PC-9 (cell line): ENCODE measurements at regions of chr19 and their contacts with region 1.

Region 1: GRCh38 chr19:57279418-57280066 is 743 bp upstream of the ZNF460 start:
- DNase-seq: peak; percentile 91 to 93
- H3K4me3 ChIP-seq: peak overlapping the region; percentile 79
- H3K27ac ChIP-seq: peak overlapping the region; percentile 97
- H3K4me1 ChIP-seq: peaks cover 41% of the 10 kb centered on the region
- H3K27me3 ChIP-seq: no peaks in the 10 kb centered on the region
- CTCF ChIP-seq: no peak; the same call in none of the 2 replicates

Region 2: DNA sequence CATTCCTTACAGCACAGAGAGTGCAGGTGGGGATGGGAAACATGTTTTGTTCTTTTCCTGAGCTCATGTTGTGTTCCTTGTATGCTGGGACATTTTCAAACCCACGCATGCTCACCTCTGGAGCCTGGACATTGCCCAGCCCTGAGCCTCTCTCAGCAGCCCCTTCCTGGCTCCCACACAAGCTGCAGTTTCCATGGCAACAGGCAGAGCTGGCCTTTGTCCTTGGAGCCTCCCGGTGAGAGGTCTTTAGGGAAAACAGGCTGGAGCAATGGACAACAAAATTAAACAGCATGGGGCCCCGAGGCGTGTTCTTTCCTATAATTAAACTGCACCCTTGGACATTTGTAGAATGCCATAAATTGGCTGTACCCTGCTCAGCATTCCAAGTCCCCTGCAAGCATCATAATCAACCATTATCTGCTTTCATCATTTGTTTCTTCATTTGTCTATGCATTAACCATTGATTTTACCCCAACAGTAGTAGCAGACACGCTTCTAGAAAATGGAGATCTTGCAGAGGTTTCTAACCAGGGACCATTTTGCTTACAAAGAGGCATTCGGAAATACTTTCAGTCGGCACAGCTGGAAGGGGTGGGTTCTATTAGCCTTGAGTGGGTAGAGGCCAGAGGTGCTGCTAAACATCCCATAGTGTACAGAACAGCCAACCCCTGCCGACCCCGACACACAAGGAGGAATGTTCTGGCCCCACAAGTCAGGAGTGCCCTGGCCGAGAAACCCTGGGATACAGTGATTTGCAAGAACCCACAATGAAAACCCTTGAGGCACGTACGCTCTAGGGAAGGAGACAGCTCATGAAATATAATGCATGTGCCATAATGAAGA is 305.6 kb before region 1 on chr19:
- CTCF ChIA-PET with region 1: no interaction called
- POLR2A ChIA-PET with region 1: no interaction called
- intact Hi-C with region 1: no loop called
- DNase-seq: no peak
- H3K4me3 ChIP-seq: no peak overlapping the region
- H3K27ac ChIP-seq: no peak overlapping the region
- H3K4me1 ChIP-seq: no peaks in the 10 kb centered on the region
- H3K27me3 ChIP-seq: peaks cover 92% of the 10 kb centered on the region
- CTCF ChIP-seq: no peak

Region 3: DNA sequence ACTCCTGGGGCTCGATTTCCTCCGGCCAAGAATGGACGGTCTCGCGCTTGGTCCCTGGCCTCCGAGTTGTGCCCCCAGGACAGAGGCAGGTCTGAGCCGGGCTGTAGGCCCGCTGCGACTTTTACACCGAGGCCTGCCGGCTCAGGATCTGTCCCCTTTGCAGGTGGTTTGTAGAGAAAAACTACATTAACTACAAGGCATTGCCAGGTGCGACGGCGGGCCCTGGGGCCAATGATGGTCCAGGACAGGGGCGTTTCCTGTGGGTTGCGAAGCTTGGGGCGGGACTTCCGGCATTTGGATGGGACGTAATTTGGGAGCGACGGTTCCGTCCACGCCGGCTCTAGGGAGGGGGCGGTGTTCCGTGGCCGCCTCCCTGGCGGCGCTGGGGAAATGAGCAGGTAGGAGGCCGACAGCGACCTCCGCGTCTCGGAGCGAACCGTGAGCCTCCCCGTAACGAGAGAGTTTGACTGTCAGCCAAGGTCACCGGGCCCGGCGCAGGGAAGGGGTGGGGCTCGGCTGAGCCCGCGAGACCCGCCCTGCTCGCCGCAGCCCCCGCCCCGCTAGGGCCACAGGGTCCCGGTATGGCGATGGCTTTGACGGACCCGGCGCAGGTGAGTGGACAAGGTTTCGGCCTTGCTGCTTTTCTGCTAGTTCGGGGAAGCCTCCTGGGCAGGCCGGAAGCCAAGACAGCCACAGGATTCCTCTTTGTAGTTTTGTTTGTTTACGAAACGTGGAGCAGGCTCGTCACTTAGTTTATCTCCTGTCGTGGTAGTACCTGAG is 39.0 kb before region 1 on chr19 and contains the start of gene ZNF805:
- CTCF ChIA-PET with region 1: interaction called, 3 read pairs
- POLR2A ChIA-PET with region 1: no interaction called
- intact Hi-C with region 1: loop called (anchors 1 kb)
- DNase-seq: peak; percentile 82 to 94
- H3K4me3 ChIP-seq: peak within 1 kb of the TSS; percentile 95
- H3K27ac ChIP-seq: peak within 1 kb of the TSS; percentile 69
- H3K4me1 ChIP-seq: peaks cover 17% of the 10 kb centered on the region; the same call in 1 of the 2 replicates
- H3K27me3 ChIP-seq: no peaks in the 10 kb centered on the region
- CTCF ChIP-seq: no peak
- total RNA-seq, gene ZNF805: 13.5 and 19.8 TPM in 2 replicates

Region 4: DNA sequence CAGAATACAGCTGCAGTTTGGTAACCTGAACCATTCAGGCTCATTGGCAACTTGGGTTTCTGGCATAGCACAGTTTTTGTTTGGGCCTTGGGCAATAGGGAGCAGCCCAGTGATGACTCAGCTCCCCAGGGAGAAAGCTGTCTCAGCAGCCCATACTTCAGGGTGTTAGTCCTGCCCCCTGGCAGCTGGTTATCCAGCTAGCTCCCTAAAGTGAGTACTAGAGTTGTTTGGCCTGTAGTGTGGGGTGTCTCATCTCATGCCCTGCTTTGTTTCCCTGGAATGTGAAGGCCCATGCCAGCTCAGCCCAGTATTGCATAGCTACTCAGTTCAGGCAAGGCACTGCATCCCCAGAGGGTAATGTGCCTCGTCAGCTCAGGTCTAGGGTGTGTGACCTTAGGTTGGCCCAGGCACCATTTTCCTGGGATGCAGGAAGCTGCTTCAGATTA is 22.5 kb after region 1 on chr19:
- CTCF ChIA-PET with region 1: no interaction called
- POLR2A ChIA-PET with region 1: no interaction called
- intact Hi-C with region 1: loop called (anchors 1 kb)
- DNase-seq: peak; percentile 89 to 95
- H3K4me3 ChIP-seq: no peak overlapping the region
- H3K27ac ChIP-seq: peak overlapping the region; percentile 59
- H3K4me1 ChIP-seq: peaks cover 26% of the 10 kb centered on the region
- H3K27me3 ChIP-seq: no peaks in the 10 kb centered on the region
- CTCF ChIP-seq: no peak

Region 5: DNA sequence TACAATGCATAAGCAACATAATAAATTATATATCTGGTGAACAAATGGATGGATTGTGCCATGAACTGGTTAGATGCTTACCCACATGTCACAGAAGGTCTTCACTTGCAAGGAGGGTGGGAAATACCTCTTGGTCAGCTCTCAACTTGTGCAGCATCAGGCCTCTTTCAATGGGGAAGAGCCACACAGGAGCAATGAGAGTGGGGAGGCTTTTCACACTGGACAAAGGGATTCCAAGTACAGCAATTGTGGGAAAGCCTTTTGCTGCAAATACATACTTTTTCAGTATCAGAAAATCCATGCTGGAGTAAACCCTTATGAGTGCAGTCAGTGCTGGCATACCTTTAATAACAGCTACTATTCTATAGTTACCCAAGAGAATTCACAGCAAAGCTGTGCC is 29.0 kb after region 1 on chr19:
- CTCF ChIA-PET with region 1: no interaction called
- POLR2A ChIA-PET with region 1: interaction called, 15 read pairs
- intact Hi-C with region 1: no loop called
- DNase-seq: peak in 1 of 2 experiments; percentile 31
- H3K4me3 ChIP-seq: no peak overlapping the region
- H3K27ac ChIP-seq: no peak overlapping the region
- H3K4me1 ChIP-seq: no peaks in the 10 kb centered on the region
- H3K27me3 ChIP-seq: no peaks in the 10 kb centered on the region
- CTCF ChIP-seq: no peak

Region 6: DNA sequence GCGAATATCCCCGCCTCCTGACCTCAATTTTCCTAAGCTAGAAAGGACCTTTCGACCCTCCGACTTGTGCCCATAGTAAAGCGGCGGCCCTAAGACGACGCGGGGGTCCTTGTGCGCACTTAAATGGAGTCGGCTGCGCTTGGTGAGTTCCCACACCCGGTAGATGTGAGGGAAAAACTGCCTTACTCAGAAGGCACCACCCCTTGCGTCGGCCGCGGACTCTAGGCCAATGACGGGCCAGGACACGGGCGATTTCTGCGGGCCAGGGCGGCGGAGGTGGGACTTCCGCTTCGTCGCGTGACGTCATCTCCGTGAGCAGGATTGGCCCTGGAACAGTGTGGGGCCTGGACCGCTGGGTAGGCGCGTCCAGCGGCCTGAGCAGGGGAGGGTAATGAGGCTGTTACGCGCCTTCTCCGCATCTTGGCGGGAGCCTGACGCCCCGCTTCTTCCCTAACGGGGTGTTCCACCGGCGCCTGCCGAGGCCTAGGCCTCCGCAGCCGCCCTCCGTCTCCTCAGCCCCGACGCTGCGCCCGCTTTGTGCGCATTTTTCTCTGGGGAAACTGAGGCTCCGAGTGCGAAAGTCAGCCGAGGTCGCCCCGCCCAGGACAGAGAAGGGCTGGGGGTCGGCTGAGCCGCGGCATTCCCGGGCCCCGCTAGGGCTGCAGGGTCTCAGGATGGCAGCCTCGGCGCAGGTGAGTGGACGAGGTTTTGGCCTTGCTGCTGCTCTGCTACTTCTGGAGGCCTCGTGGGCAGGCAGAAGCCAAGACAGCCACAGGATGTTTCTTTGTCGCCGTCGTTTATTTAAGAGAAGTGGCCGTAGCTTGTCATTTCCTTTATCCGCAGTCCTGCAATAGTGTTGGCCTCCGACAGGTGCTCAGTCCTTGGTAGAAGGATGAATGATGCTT is 40.9 kb after region 1 on chr19 and contains the start of gene ZNF543:
- CTCF ChIA-PET with region 1: no interaction called
- POLR2A ChIA-PET with region 1: no interaction called
- intact Hi-C with region 1: loop called (anchors 1 kb)
- DNase-seq: peak; percentile 92 to 96
- H3K4me3 ChIP-seq: peak within 1 kb of the TSS; percentile 91
- H3K27ac ChIP-seq: peak within 1 kb of the TSS; percentile 51
- H3K4me1 ChIP-seq: peaks cover 19% of the 10 kb centered on the region
- H3K27me3 ChIP-seq: no peaks in the 10 kb centered on the region
- CTCF ChIP-seq: no peak
- total RNA-seq, gene ZNF543: 8.9 and 9.5 TPM in 2 replicates

Region 7: GRCh38 chr19:57338877-57339276 is 59.3 kb after region 1 on chr19:
- CTCF ChIA-PET with region 1: no interaction called
- POLR2A ChIA-PET with region 1: no interaction called
- intact Hi-C with region 1: no loop called
- DNase-seq: no peak
- H3K4me3 ChIP-seq: no peak overlapping the region
- H3K27ac ChIP-seq: no peak overlapping the region
- H3K4me1 ChIP-seq: no peaks in the 10 kb centered on the region
- H3K27me3 ChIP-seq: no peaks in the 10 kb centered on the region
- CTCF ChIP-seq: no peak

Region 8: GRCh38 chr19:57350877-57351805 is 71.6 kb after region 1 on chr19 and contains the start of gene ZNF304:
- CTCF ChIA-PET with region 1: no interaction called
- POLR2A ChIA-PET with region 1: interaction called, 4 read pairs
- intact Hi-C with region 1: loop called (anchors 1 kb)
- DNase-seq: peak; percentile 94 to 95
- H3K4me3 ChIP-seq: peak within 1 kb of the TSS; percentile 95
- H3K27ac ChIP-seq: 0 out of 2 replicates have a peak within 1 kb of the TSS, but pooled peaks have one; percentile 16
- H3K4me1 ChIP-seq: peaks cover 10% of the 10 kb centered on the region
- H3K27me3 ChIP-seq: no peaks in the 10 kb centered on the region
- CTCF ChIP-seq: no peak
- total RNA-seq, gene ZNF304: 10.9 and 11.4 TPM in 2 replicates

Region 9: GRCh38 chr19:57362997-57363705 is 83.6 kb after region 1 on chr19 and contains the starts of genes TRAPPC2B and ZNF547:
- CTCF ChIA-PET with region 1: no interaction called
- POLR2A ChIA-PET with region 1: no interaction called
- intact Hi-C with region 1: loop called (anchors 1 kb)
- DNase-seq: peak; percentile 99
- H3K4me3 ChIP-seq: peak within 1 kb of the TSS; percentile 72
- H3K27ac ChIP-seq: peak within 1 kb of the TSS; percentile 47
- H3K4me1 ChIP-seq: peaks cover 6% of the 10 kb centered on the region; the same call in 1 of the 2 replicates
- H3K27me3 ChIP-seq: no peaks in the 10 kb centered on the region
- CTCF ChIP-seq: no peak
- total RNA-seq, gene TRAPPC2B: 14.1 and 15.3 TPM in 2 replicates
- total RNA-seq, gene ZNF547: 3.1 and 6.0 TPM in 2 replicates